ENCODE measurements at regions of chr1 and their contacts with region 1.

Region 1: DNA sequence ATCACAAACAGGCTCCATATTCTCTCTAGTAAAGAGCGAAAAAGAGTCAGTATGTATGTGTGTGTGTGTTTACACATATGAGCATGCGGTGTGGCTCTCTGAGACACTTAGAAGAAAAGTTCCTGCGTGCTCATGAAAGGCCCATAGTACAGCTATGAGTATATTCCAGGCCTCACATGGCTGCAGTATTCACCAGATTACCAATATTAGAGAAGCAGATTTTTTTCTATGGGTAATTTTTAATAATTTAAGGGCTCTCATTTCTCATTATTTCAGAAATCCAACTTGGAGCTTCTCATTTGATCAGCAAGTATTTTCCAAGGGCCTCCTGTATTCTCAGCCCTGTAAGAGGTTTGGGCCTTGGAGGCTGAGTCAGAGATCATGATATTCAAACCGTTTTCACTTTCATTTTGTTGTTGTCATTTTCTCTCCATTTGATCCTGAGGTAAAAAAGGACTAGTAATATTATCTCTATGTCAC is 232.9 kb upstream of the SGIP1 start:
- DNase-seq: peak; percentile 18
- CTCF ChIP-seq: no peak

Region 2: DNA sequence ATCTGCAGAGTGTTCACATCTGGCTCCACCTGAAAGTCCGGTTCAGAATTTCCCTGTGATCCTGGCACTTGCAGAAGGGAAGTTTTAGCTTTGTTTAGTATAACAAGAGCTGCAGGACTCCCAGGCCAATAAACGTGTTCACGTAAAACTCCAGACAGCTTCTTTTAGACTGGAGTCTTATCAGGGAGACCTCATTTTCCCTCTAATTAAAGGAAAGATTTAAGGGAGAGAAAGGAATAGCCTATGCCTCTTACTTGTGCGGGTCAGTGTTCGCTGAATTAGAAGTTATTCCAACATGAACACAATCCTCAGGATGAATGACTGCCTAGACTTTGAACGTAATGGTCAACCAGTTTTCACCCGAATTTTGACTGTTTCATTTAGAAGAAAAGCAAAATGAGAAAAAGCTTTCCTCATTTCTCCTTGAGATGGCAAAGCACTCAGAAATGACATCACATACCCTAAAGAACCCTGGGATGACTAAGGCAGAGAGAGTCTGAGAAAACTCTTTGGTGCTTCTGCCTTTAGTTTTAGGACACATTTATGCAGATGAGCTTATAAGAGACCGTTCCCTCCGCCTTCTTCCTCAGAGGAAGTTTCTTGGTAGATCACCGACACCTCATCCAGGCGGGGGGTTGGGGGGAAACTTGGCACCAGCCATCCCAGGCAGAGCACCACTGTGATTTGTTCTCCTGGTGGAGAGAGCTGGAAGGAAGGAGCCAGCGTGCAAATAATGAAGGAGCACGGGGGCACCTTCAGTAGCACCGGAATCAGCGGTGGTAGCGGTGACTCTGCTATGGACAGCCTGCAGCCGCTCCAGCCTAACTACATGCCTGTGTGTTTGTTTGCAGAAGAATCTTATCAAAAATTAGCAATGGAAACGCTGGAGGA is 30.9 kb after region 1 on chr1:
- CTCF ChIA-PET with region 1: interaction called, 12 read pairs
- POLR2A ChIA-PET with region 1: no interaction called
- DNase-seq: no peak
- CTCF ChIP-seq: no peak